Naive thymus-derived CD4-positive, alpha-beta T cell (primary cell): ENCODE measurements at regions of chr3 and their contacts with region 1.

Region 1: GRCh38 chr3:160941885-160942494 is 163.2 kb downstream of the B3GALNT1 start:
- DNase-seq: peak; percentile 26 to 73 (median 61)
- ATAC-seq: peak; percentile 77
- H3K4me3 ChIP-seq: no peak overlapping the region
- H3K4me3 Mint-ChIP-seq: no peak overlapping the region
- H3K27ac ChIP-seq: no peak overlapping the region
- H3K27ac Mint-ChIP-seq: no peak overlapping the region
- H3K4me1 ChIP-seq: no peaks in the 10 kb centered on the region
- H3K4me1 Mint-ChIP-seq: peaks cover 0 to 5% (median 3%) of the 10 kb centered on the region in 7 donors
- H3K27me3 ChIP-seq: no peaks in the 10 kb centered on the region
- H3K27me3 Mint-ChIP-seq: peaks cover 0 to 7% (median 0%) of the 10 kb centered on the region in 5 donors

Region 2: DNA sequence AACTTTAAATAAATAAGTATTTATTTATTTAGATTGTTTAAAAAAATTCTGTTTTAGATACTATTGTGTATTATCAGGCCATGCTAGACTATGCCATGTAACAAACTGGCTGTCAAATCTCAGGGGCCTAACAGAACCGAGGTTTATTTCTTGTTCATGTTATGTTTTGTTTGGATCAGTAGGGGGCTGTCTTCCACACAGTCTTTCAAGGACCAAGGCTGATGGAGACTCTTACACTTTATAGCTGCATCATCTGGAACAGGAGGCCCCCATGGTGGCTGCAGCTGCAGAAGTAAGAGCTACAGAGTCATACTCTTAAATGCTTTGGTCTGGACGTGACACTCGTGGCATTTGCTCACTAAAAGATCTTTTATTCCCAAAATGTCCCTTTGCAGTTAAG is 298.0 kb before region 1 on chr3:
- CTCF ChIA-PET with region 1: no interaction called
- POLR2A ChIA-PET with region 1: no interaction called
- intact Hi-C with region 1: loop called in 1 of 2 experiments (anchors 1 kb)
- DNase-seq: no peak
- ATAC-seq: no peak
- H3K4me3 ChIP-seq: no peak overlapping the region
- H3K4me3 Mint-ChIP-seq: no peak overlapping the region
- H3K27ac ChIP-seq: no peak overlapping the region
- H3K27ac Mint-ChIP-seq: no peak overlapping the region
- H3K4me1 ChIP-seq: no peaks in the 10 kb centered on the region
- H3K4me1 Mint-ChIP-seq: no peaks in the 10 kb centered on the region
- H3K27me3 ChIP-seq: no peaks in the 10 kb centered on the region
- H3K27me3 Mint-ChIP-seq: peaks cover 0 to 6% (median 3%) of the 10 kb centered on the region in 5 donors

Region 3: DNA sequence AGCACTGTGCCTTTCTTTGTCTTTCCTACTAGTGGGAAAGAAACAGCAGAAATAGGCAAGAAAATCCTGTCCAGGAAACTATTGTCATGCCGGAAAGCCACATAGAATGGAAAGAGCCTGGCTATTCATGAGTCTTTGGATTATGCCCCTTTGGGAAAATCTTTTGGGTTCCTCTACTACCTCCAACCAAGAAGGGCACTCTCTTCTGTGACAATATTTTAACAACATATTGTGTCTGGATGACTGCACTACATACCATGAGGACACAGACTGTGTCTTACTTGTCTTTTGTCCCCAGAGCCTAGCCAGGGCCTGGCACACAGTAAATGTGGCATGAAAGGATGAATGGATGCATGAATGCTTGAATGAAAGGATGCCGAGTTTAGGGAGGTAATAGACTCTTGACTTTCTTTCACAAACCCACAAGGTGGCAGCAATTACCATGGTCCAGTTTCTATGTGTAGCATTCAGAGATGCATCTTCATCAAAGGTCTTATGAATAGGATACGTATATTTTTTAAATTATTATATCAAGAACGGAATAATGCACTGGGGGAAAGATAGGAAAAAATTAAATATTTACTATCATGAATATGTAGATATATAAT is 234.7 kb before region 1 on chr3:
- CTCF ChIA-PET with region 1: interaction called, 26 read pairs
- POLR2A ChIA-PET with region 1: interaction called, 4 read pairs
- intact Hi-C with region 1: loop called (anchors 1 kb)
- DNase-seq: peak in 7 of 9 donors; percentile 18 to 62 (median 47)
- ATAC-seq: peak; percentile 71
- H3K4me3 ChIP-seq: no peak overlapping the region
- H3K4me3 Mint-ChIP-seq: no peak overlapping the region
- H3K27ac ChIP-seq: no peak overlapping the region
- H3K27ac Mint-ChIP-seq: no peak overlapping the region
- H3K4me1 ChIP-seq: no peaks in the 10 kb centered on the region
- H3K4me1 Mint-ChIP-seq: no peaks in the 10 kb centered on the region
- H3K27me3 ChIP-seq: peaks cover 0 to 5% of the 10 kb centered on the region in 2 donors
- H3K27me3 Mint-ChIP-seq: peaks cover 28 to 43% (median 36%) of the 10 kb centered on the region in 5 donors

Region 4: DNA sequence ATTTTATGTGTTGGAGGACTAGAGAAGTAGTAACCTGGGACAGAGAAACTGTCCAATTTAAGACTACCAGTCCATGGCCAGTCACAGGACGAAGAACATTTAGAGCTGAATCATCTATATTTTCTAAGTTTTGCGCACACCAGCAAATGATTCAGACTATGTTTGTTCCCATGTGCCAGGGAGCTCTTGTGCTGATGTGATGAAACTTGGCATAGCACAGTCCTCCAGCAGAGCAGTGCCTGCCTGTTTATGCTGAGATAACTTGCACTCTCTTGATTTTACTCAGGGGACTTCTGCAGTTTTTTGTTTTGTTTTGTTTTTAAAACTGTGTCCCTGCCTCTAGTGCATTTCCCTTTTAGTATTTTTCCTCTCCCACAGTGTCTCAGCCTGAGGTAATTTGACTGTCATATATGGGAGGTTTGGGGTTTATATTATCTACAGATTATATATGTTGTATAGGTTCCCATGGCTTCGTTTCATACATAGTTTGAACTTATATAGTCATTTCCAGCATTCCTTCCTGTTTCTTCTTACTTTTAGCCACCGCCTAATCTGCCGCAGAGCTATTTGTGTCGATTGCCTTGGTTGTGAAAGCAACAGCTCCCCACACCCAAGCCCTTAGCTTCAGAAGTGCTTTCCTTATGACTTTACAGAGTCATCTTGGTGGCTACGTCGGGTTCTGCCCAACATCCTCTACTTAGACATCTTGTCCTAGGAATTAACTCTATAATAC is 140.4 kb before region 1 on chr3:
- CTCF ChIA-PET with region 1: no interaction called
- POLR2A ChIA-PET with region 1: no interaction called
- intact Hi-C with region 1: loop called in 1 of 2 experiments (anchors 5 kb)
- DNase-seq: peak in 7 of 9 donors; percentile 1 to 59 (median 10)
- ATAC-seq: peak; percentile 87
- H3K4me3 ChIP-seq: no peak overlapping the region
- H3K4me3 Mint-ChIP-seq: peak overlapping the region in 8 of 10 donors; percentile 7 to 67 (median 54)
- H3K27ac ChIP-seq: no peak overlapping the region
- H3K27ac Mint-ChIP-seq: peak overlapping the region in 4 of 9 donors; percentile 10 to 92 (median 72)
- H3K4me1 ChIP-seq: peaks cover 0 to 5% of the 10 kb centered on the region in 2 donors
- H3K4me1 Mint-ChIP-seq: peaks cover 0 to 26% (median 10%) of the 10 kb centered on the region in 7 donors
- H3K27me3 ChIP-seq: no peaks in the 10 kb centered on the region
- H3K27me3 Mint-ChIP-seq: peaks cover 0 to 11% (median 7%) of the 10 kb centered on the region in 5 donors

Region 5: GRCh38 chr3:161295325-161295724 is 353.3 kb after region 1 on chr3:
- CTCF ChIA-PET with region 1: no interaction called
- POLR2A ChIA-PET with region 1: no interaction called
- intact Hi-C with region 1: no loop called
- DNase-seq: no peak
- ATAC-seq: no peak
- H3K4me3 ChIP-seq: no peak overlapping the region
- H3K4me3 Mint-ChIP-seq: no peak overlapping the region
- H3K27ac ChIP-seq: no peak overlapping the region
- H3K27ac Mint-ChIP-seq: no peak overlapping the region
- H3K4me1 ChIP-seq: no peaks in the 10 kb centered on the region
- H3K4me1 Mint-ChIP-seq: no peaks in the 10 kb centered on the region
- H3K27me3 ChIP-seq: no peaks in the 10 kb centered on the region
- H3K27me3 Mint-ChIP-seq: peaks cover 0 to 20% (median 0%) of the 10 kb centered on the region in 5 donors

Region 6: DNA sequence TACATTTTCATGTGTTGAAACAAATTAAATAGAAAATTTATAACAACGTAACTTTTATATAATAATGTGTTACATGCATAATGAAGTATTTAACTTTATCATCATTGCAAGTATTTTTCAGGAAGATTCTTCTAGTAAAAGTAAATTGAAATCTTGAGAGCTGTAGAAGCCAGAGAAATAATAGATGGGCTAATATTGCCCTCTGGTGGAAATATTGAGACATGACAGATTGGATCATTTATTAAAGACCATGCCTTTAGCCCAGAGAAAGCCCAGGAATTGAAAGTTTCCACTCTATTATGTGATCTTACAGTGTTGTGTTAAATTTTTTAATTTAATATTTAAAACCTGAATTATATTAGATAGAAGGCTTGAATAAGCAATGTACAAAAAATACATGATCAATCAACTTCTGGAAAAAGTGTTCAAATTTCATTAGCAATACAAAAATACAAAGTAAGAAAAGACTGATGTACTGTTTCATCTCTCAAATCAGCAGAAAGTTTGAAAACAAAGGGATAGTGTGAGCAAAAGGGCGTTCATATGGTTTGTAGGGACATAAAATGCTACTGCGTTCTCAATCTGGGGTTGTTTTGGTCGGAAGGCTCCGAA is 482.0 kb after region 1 on chr3:
- CTCF ChIA-PET with region 1: no interaction called
- POLR2A ChIA-PET with region 1: no interaction called
- intact Hi-C with region 1: loop called (anchors 1 to 5 kb)
- DNase-seq: peak in 6 of 9 donors; percentile 29 to 54 (median 48)
- ATAC-seq: peak; percentile 61
- H3K4me3 ChIP-seq: no peak overlapping the region
- H3K4me3 Mint-ChIP-seq: no peak overlapping the region
- H3K27ac ChIP-seq: no peak overlapping the region
- H3K27ac Mint-ChIP-seq: no peak overlapping the region
- H3K4me1 ChIP-seq: no peaks in the 10 kb centered on the region
- H3K4me1 Mint-ChIP-seq: peaks cover 0 to 6% (median 3%) of the 10 kb centered on the region in 7 donors
- H3K27me3 ChIP-seq: no peaks in the 10 kb centered on the region
- H3K27me3 Mint-ChIP-seq: peaks cover 0 to 10% (median 5%) of the 10 kb centered on the region in 5 donors